Left ventricle myocardium inferior (tissue), 1 donor: ENCODE measurements at regions of chr11 and their contacts with region 1.

Region 1: GRCh38 chr11:121023848-121024751 is at the start of gene TBCEL:
- DNase-seq: peak; percentile 90
- H3K4me3 ChIP-seq: peak within 1 kb of the TSS; percentile 76
- H3K27ac ChIP-seq: peak within 1 kb of the TSS; percentile 73
- H3K4me1 ChIP-seq: peaks cover 45% of the 10 kb centered on the region
- H3K27me3 ChIP-seq: no peaks in the 10 kb centered on the region
- CTCF ChIP-seq: no peak
- total RNA-seq, gene TBCEL: 25.0 TPM

Region 2: DNA sequence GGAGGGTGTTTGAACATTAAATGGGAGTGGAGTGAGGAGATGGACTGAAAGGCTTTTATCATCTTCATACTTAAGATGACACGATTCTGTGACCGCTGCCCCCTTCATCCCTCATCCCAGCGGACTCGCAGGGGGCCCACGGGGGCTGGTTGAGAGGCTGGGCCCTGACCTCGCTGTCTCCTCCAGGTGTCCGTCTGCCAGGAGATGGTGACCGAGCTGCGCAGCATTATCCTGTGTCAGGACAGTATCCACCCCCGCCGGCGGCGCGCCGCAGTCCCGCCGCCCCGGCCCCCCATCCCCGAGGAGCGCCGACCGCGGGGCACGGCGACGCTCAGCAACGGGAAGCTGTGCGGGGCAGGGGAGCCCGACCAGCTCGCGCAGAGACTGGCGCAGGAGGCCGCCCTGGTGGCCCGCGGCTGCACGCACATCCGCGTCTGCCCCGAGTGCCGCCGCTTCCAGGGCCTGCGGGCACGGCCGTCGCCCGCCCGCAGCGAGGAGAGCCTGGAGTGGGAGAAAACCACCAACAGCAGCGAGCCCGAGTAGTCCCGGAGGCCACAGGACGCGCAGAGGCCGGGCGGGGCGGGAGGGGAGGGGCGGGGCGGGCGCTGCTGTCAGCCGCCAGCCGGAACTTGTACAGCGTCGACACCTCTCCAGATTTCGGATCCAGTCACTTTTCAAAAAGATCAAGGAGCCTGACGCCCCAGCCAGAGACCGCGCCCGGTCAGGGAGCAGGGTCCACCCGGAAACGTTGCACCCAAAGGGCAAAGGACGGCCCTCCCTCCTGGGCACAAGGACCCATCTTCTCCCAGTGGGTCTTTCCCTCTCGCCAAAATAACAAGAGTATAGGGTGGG is 38.2 kb before region 1 on chr11:
- intact Hi-C with region 1: no loop called
- DNase-seq: peak; percentile 24
- H3K4me3 ChIP-seq: peak overlapping the region; percentile 65
- H3K27ac ChIP-seq: no peak overlapping the region
- H3K4me1 ChIP-seq: peaks cover 12% of the 10 kb centered on the region
- H3K27me3 ChIP-seq: peaks cover 51% of the 10 kb centered on the region
- CTCF ChIP-seq: peak; percentile 52

Region 3: GRCh38 chr11:121104312-121104762 is 80.2 kb after region 1 on chr11:
- intact Hi-C with region 1: loop called (anchors 10 kb)
- DNase-seq: peak; percentile 45
- H3K4me3 ChIP-seq: no peak overlapping the region
- H3K27ac ChIP-seq: peak overlapping the region; percentile 73
- H3K4me1 ChIP-seq: peaks cover 22% of the 10 kb centered on the region
- H3K27me3 ChIP-seq: no peaks in the 10 kb centered on the region
- CTCF ChIP-seq: peak; percentile 22